Activated CD4-positive, alpha-beta memory T cell treated with anti-CD3 and anti-CD28 coated beads for 36 hours (primary cell): ENCODE measurements at regions of chr12 and their contacts with region 1.

Region 1: DNA sequence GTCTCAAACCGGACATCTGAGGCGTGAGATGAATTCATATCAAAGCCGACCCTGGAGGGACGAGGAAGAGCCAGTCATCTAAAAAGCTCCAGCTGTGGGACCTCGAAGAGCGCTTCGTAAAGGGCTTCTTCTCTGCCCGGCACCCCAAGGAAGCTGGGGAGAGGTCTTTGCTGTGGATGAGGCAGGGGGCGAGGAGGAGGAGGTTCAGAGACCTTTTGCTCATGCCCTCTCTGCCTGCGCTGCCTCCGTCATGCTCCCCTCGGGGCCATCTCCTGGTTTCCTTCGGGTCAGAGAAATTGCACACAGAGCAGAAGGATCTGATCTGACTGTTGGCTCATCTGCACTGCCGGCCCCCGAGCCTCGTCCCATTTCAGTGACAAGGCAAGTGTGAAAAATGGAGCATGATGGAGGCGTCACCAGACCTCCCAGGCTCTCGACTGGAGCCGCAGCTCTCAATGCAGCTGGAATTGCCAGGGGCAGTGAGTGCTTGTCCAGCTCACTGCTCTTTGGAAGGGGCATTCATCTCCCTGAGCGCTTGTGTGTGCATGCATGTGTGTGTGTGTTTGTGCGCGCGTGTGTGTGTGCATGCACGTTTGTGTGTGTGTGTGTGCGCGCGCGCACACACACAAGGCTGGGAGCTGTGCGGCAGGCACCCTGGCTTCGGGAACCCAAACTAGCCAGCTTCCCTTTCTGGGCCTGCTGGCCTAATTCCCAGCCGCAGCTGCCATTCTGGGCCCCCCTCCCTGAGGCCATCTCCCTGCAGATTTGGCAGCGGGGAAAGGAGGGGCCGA is 9.2 kb downstream of the CABP1 start:
- DNase-seq: no peak
- H3K4me3 Mint-ChIP-seq: peak overlapping the region; percentile 45
- H3K27ac Mint-ChIP-seq: no peak overlapping the region
- H3K4me1 Mint-ChIP-seq: peaks cover 15% of the 10 kb centered on the region
- H3K27me3 Mint-ChIP-seq: peaks cover 44% of the 10 kb centered on the region

Region 2: DNA sequence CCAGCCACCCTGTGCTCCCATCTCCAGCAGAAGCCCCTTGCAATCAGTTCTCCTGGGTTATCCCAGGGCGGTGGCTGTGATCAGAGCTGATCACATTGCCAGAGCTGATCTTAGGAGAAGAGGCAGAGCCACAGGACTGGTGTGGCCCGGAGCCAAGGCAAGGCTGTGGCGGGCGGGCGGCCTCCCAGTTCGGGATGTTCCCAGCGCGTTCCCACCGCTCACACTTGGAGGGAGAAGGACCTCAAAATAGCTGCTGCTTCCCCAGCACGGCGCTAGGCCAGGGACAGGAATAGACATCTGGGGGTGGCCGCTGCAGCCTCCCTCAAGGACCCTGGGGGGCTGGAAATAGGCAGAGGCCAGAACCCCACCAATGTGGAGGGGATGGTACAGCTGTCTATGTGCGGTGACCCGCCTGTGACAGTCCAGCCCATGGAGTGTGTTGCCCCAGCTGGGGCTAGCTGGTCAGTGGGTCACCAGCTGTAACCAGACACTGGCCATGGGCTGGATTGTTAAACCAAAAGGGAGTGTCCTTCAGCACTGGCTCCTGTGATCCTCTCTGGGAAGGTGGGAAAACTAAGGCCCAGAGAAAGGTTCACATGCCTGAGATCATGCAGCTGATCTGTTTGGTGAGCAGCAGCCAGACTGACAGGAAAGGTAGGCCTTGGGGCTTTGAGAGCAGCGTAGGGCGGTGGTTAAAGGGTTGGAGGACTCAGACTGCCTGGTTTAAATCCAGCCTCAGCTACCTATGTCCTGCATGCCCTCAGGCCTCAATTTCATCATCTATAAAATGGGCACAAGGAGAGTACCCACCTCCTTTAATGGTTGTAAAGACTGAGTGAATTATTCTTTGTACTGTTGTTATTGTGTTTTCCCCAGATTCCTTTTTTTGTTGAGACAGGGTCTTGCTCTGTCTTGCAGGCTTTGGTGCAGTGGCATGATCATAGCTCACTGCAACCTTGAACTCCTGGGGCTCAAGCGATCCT is 60.4 kb before region 1 on chr12:
- CTCF ChIA-PET with region 1: interaction called, 161 read pairs
- POLR2A ChIA-PET with region 1: no interaction called
- intact Hi-C with region 1: no loop called
- DNase-seq: no peak
- H3K4me3 Mint-ChIP-seq: no peak overlapping the region
- H3K27ac Mint-ChIP-seq: no peak overlapping the region
- H3K4me1 Mint-ChIP-seq: no peaks in the 10 kb centered on the region
- H3K27me3 Mint-ChIP-seq: no peaks in the 10 kb centered on the region

Region 3: GRCh38 chr12:120677765-120678473 is 28.3 kb after region 1 on chr12:
- CTCF ChIA-PET with region 1: interaction called, 47 read pairs
- POLR2A ChIA-PET with region 1: no interaction called
- intact Hi-C with region 1: no loop called
- DNase-seq: peak; percentile 56
- H3K4me3 Mint-ChIP-seq: no peak overlapping the region
- H3K27ac Mint-ChIP-seq: peak overlapping the region; percentile 60
- H3K4me1 Mint-ChIP-seq: peaks cover 14% of the 10 kb centered on the region
- H3K27me3 Mint-ChIP-seq: peaks cover 1% of the 10 kb centered on the region

Region 4: DNA sequence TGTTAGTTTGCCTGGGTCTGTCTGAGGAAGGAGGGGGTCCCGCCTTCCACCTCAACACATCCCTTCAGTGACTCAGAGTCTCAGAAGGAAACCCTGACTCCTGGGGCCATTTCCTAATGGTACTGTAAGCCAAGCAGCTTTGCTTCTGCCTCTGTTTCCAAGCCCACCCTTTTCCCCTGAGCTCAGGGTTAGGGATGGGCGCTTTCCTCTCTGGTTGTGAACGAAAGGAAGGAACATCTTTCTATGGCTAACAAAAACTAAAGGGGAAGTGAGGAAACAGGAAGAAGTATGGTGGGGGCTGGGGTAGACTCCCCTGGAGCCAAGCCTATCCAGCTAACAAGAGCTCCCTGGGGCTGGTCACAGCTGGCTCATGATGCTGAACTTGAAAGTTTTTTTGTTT is 49.0 kb after region 1 on chr12:
- CTCF ChIA-PET with region 1: interaction called, 25 read pairs
- POLR2A ChIA-PET with region 1: no interaction called
- intact Hi-C with region 1: no loop called
- DNase-seq: no peak
- H3K4me3 Mint-ChIP-seq: no peak overlapping the region
- H3K27ac Mint-ChIP-seq: no peak overlapping the region
- H3K4me1 Mint-ChIP-seq: no peaks in the 10 kb centered on the region
- H3K27me3 Mint-ChIP-seq: no peaks in the 10 kb centered on the region

Region 5: GRCh38 chr12:120710031-120710804 is 60.6 kb after region 1 on chr12 and contains the start of gene UNC119B:
- CTCF ChIA-PET with region 1: interaction called, 52 read pairs
- POLR2A ChIA-PET with region 1: no interaction called
- intact Hi-C with region 1: loop called (anchors 1 kb)
- DNase-seq: peak; percentile 78
- H3K4me3 Mint-ChIP-seq: peak within 1 kb of the TSS; percentile 84
- H3K27ac Mint-ChIP-seq: peak within 1 kb of the TSS; percentile 67
- H3K4me1 Mint-ChIP-seq: peaks cover 33% of the 10 kb centered on the region
- H3K27me3 Mint-ChIP-seq: no peaks in the 10 kb centered on the region
- total RNA-seq, gene UNC119B: 28.2 to 31.3 TPM

Region 6: DNA sequence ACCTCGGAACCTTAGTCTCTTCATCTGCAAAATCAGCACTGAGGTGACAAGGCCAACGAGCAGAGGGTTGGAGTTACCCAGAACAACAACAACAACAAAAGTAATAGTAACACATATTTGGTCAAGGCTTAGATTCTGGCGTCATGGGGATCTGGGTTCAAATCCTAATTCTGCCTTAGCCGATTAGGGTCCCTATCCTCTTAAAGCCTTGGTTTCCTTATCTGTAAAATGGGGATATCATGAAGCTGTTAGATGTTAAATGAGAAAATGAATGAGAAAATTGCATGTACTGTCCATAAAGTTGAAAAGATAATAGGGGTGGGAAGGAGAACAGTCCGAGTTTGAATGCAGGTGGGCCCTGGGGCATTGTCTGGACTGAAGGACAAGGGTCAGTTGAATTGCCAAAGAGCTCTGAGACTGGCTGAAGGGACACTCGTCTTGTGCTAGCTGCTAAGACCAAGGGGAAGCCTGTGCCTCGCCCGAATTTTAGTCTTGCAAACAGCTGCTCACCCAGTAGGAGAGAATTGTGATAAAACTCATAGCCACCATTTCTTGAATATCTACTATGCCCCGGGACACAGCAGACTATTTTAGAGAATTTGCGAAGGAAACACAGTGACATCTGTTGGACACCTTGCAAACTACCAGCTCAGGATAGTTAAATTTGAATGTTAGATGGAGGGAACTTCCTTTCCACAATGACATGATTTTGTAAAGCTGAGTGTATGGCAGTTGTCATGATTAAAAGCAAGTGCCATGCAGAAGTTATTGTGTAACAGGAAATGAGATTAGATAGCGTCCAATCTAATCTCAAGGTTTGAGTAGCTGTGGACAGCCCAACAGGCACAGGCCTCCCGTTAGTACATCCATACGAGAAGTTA is 321.9 kb after region 1 on chr12:
- CTCF ChIA-PET with region 1: interaction called, 67 read pairs
- POLR2A ChIA-PET with region 1: no interaction called
- intact Hi-C with region 1: loop called (anchors 2 kb)
- DNase-seq: peak; percentile 32
- H3K4me3 Mint-ChIP-seq: no peak overlapping the region
- H3K27ac Mint-ChIP-seq: no peak overlapping the region
- H3K4me1 Mint-ChIP-seq: peaks cover 4% of the 10 kb centered on the region
- H3K27me3 Mint-ChIP-seq: no peaks in the 10 kb centered on the region

Region 7: DNA sequence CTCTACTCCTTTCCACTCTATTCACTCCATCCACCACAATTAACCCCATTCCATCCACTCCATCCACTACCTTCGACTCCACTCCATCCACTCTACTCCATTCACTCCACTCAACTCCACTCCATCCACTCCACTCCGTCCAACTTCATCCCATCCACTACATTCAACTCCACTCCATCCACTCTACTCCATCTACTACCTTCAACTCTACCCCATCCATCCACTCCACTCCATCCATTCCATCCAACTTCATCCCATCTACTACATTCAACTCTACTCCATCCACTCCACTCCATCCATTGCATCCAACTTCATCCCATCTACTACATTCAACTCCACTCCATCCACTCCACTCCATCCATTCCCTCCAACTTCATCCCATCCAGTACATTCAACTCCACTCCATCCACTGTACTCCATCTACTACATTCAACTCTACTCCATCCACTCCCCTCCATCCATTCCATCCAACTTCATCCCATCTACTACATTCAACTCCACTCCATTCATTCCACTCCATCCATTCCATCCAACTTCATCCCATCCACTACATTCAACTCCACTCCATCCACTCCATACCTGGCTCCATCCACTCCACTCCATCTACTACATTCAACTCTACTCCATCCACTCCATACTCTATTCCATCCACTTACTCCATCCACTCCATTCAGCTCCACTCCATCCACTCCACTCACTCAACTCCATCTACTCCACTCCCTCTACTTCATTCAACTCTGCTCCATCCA is 345.1 kb after region 1 on chr12:
- CTCF ChIA-PET with region 1: no interaction called
- POLR2A ChIA-PET with region 1: no interaction called
- intact Hi-C with region 1: no loop called
- DNase-seq: no peak
- H3K4me3 Mint-ChIP-seq: no peak overlapping the region
- H3K27ac Mint-ChIP-seq: no peak overlapping the region
- H3K4me1 Mint-ChIP-seq: no peaks in the 10 kb centered on the region
- H3K27me3 Mint-ChIP-seq: peaks cover 2% of the 10 kb centered on the region